Panc1 (cell line): ENCODE measurements at regions of chr4 and their contacts with region 1.

Region 1: GRCh38 chr4:174714393-174715211 is 114.4 kb downstream of the GLRA3 start:
- DNase-seq: peak; percentile 32
- ATAC-seq: 0 out of 2 replicates have a peak, but pooled peaks have one; percentile 83
- H3K4me3 ChIP-seq: no peak overlapping the region
- H3K27ac ChIP-seq: no peak overlapping the region
- H3K4me1 ChIP-seq: no peaks in the 10 kb centered on the region
- H3K27me3 ChIP-seq: no peaks in the 10 kb centered on the region
- CTCF ChIP-seq: peak; percentile 80

Region 2: GRCh38 chr4:174365018-174365587 is 349.5 kb before region 1 on chr4:
- CTCF ChIA-PET with region 1: no interaction called
- POLR2A ChIA-PET with region 1: no interaction called
- in situ Hi-C with region 1: no loop called
- intact Hi-C with region 1: loop called (anchors 2 kb)
- DNase-seq: no peak
- ATAC-seq: no peak
- H3K4me3 ChIP-seq: no peak overlapping the region
- H3K27ac ChIP-seq: no peak overlapping the region
- H3K4me1 ChIP-seq: no peaks in the 10 kb centered on the region
- H3K27me3 ChIP-seq: no peaks in the 10 kb centered on the region
- CTCF ChIP-seq: peak; percentile 34; the same call in 1 of the 2 replicates

Region 3: GRCh38 chr4:174835536-174835935 is 120.9 kb after region 1 on chr4:
- CTCF ChIA-PET with region 1: no interaction called
- POLR2A ChIA-PET with region 1: no interaction called
- in situ Hi-C with region 1: no loop called
- intact Hi-C with region 1: no loop called
- DNase-seq: no peak
- ATAC-seq: no peak
- H3K4me3 ChIP-seq: no peak overlapping the region
- H3K27ac ChIP-seq: no peak overlapping the region
- H3K4me1 ChIP-seq: no peaks in the 10 kb centered on the region
- H3K27me3 ChIP-seq: no peaks in the 10 kb centered on the region
- CTCF ChIP-seq: no peak